ENCODE measurements at regions of chr17 and their contacts with region 1.

Region 1: DNA sequence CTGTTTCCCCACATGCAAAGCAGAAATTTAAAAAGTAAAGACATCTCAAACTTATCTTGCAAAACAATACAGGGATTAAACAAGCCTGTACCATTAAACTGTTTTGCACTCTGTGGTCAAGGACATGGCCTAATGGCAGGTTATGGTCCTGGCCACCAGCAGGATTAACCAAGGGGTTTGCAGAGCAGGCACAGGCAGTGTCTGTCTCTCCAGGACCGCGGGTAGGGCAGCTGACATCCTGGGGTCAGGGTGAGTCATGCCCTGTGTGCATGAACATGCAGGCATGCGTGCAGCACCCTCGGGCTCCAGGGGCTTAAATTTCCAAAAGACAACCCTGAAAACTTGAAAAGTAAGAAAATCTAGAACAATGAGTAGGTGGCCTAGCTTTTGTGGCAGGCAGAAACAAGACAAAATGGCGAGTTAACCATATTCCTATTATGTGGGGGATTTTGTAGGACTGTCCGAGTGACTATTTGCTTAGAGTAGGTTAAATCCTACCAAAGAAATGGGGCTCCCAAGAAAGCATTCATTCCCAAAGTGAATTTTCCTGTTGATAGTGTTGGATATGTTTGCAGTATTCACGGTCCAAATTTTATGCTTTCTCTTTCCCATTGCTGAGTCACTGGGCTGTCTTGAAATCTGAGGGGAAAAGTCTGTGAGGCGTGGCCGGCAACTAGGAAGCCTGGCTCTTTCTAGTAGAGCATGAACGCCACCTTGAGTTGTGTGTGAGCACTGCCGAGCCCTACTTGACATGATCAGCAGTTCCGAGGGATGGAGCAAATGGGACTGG is 158.4 kb upstream of the FAM20A start:
- DNase-seq: peak; percentile 98
- ATAC-seq: peak; percentile 94
- H3K4me3 ChIP-seq: peak overlapping the region; percentile 60
- H3K27ac ChIP-seq: peak overlapping the region; percentile 91
- H3K4me1 ChIP-seq: peaks cover 11% of the 10 kb centered on the region
- H3K27me3 ChIP-seq: no peaks in the 10 kb centered on the region
- CTCF ChIP-seq: peak; percentile 98

Region 2: DNA sequence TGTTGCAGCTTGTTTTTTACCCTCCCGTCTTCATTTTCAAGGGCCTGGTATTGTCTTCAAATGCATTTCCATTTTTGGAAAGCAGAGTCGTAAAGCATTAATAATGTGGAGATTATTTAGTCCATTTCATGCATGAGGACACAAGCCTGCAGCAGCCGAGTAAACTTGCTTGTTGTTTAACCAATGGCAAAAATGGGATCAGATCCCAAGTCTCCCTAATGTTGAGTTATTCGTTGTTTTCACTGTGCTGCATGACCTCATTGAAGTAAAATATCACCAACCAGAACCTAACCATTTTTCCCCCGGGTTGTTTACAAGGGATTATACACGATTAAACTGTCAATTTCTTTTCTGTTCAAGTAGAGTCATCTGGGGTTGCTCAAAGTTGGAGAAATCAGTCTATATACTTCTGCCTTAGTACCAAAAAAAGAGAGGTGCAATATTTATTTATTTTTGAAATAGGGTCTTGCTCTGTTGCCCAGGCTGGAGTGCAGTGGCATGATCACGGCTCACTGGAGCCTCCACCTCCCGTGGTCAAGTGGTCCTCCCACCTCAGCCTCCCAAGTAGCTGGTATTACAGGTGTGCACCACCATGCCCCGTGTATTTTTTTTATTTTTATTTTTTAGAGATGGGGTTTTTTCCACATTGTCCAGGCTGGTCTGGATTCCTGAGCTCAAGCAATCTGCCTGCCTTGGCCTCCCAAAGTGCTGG is 499.3 kb before region 1 on chr17:
- CTCF ChIA-PET with region 1: no interaction called
- POLR2A ChIA-PET with region 1: no interaction called
- intact Hi-C with region 1: loop called (anchors 5 kb)
- DNase-seq: no peak
- ATAC-seq: no peak
- H3K4me3 ChIP-seq: no peak overlapping the region
- H3K27ac ChIP-seq: no peak overlapping the region
- H3K4me1 ChIP-seq: no peaks in the 10 kb centered on the region
- H3K27me3 ChIP-seq: no peaks in the 10 kb centered on the region
- CTCF ChIP-seq: no peak

Region 3: DNA sequence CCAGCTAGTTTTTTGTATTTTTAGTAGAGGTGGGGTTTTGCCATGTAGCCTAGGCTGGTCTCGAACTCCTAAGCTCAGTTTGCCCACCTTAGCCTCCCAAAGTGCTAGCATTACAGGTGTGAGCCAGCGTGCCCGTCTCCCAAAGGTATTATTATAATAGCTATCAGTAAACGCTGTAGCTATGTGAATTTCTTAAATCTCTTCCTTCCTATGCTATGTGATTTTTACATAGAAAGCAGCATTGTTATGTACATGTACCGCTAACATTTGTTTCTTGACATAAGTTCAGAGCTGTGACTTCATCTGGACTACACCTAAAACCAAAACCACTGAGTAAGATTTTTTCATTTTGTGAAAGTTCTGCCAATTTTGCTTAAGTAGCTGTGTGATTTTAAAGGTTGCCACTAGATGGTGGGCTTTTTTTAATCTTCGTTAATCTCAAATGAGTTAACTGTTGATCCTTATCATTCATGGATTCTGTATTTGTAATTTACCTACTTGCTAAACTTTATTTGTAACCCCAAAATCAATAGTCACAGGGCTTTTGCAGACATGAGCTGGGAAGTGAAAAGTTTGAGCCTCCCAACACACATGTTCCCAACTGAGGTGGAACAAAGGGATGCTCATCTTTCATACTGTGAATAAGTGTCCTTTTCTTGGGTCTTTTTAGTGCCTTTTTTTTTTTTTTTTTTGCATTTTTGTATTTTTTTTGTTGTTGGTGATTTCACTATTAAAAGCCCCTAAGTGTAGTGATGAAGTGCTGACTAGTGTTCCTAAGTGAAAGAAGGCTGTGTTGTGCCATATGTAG is 225.4 kb before region 1 on chr17:
- CTCF ChIA-PET with region 1: no interaction called
- POLR2A ChIA-PET with region 1: no interaction called
- intact Hi-C with region 1: loop called (anchors 1 kb)
- DNase-seq: peak; percentile 72
- ATAC-seq: peak; percentile 44
- H3K4me3 ChIP-seq: no peak overlapping the region
- H3K27ac ChIP-seq: peak overlapping the region; percentile 88
- H3K4me1 ChIP-seq: peaks cover 22% of the 10 kb centered on the region
- H3K27me3 ChIP-seq: no peaks in the 10 kb centered on the region
- CTCF ChIP-seq: peak; percentile 90

Region 4: GRCh38 chr17:68613739-68614298 is 145.7 kb before region 1 on chr17:
- CTCF ChIA-PET with region 1: no interaction called
- POLR2A ChIA-PET with region 1: no interaction called
- intact Hi-C with region 1: loop called (anchors 2 kb)
- DNase-seq: peak; percentile 91
- ATAC-seq: peak; percentile 20; the same call in 1 of the 2 replicates
- H3K4me3 ChIP-seq: no peak overlapping the region
- H3K27ac ChIP-seq: no peak overlapping the region
- H3K4me1 ChIP-seq: peaks cover 26% of the 10 kb centered on the region
- H3K27me3 ChIP-seq: no peaks in the 10 kb centered on the region
- CTCF ChIP-seq: peak; percentile 93

Region 5: GRCh38 chr17:68646701-68647104 is 112.8 kb before region 1 on chr17:
- CTCF ChIA-PET with region 1: no interaction called
- POLR2A ChIA-PET with region 1: no interaction called
- intact Hi-C with region 1: loop called (anchors 1 kb)
- DNase-seq: peak; percentile 88
- ATAC-seq: peak; percentile 81
- H3K4me3 ChIP-seq: no peak overlapping the region
- H3K27ac ChIP-seq: peak overlapping the region; percentile 67
- H3K4me1 ChIP-seq: peaks cover 23% of the 10 kb centered on the region
- H3K27me3 ChIP-seq: 0 out of 2 replicates have a peak, but pooled peaks cover 3% of the 10 kb centered on the region
- CTCF ChIP-seq: no peak

Region 6: GRCh38 chr17:68740555-68741447 is 18.7 kb before region 1 on chr17:
- CTCF ChIA-PET with region 1: no interaction called
- POLR2A ChIA-PET with region 1: no interaction called
- intact Hi-C with region 1: no loop called
- DNase-seq: no peak
- ATAC-seq: peak; percentile 48; the same call in 1 of the 2 replicates
- H3K4me3 ChIP-seq: no peak overlapping the region
- H3K27ac ChIP-seq: no peak overlapping the region
- H3K4me1 ChIP-seq: no peaks in the 10 kb centered on the region
- H3K27me3 ChIP-seq: 0 out of 2 replicates have a peak, but pooled peaks cover 4% of the 10 kb centered on the region
- CTCF ChIP-seq: peak; percentile 60

Measured in PC-3 (cell line).